Spleen (tissue), 13 donors: ENCODE measurements at regions of chr1 and their contacts with region 1.

Region 1: DNA sequence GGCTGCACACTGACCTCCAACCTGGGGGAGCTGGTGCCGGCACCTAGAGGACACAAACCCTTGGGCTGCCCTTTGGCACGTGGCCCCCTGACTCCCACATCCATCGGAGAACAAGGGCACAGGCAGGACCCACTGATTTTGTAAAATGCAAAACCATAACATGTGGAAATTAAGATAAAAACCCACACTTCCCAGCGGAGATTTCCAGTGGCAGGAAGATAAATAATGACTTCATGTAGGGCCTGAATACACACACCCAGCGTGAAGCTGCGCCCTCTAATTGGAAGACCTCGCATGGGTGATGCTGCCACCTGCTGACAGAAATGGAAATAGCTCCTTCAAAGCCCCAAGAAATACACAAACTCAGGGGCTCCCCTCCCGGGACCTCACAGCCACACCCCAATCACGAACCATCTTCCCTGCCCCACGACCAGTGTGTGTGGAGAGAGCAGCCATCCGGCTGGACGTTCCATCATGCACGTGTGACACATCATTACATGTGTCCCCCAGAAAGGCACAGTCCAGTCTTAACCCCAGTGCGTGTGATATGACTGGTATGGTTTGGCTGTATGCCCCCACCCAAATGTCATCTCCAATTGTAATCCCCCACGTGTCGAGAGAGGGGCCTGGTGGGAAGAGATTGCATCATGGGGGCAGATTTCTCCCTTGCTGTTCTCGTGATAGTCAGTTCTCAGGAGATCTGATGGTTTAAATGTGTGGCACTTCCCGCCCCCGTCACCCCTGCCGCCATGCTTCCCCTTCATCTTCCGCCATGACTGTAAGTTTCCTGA is 5.7 kb upstream of the TPRG1L start:
- DNase-seq: peak; percentile 86
- H3K4me3 ChIP-seq: no peak overlapping the region
- H3K27ac ChIP-seq: peak overlapping the region in 1 of 8 donors; percentile 18
- H3K4me1 ChIP-seq: peaks cover 23 to 58% (median 35%) of the 10 kb centered on the region in 6 donors
- H3K27me3 ChIP-seq: peaks cover 0 to 32% (median 0%) of the 10 kb centered on the region in 7 donors
- CTCF ChIP-seq: peak; percentile 67 to 90 (median 85)
- POLR2A ChIP-seq: no peak

Region 2: GRCh38 chr1:3491291-3492246 is 127.5 kb before region 1 on chr1:
- intact Hi-C with region 1: loop called (anchors 2 kb)
- DNase-seq: peak; percentile 95
- H3K4me3 ChIP-seq: peak overlapping the region in 3 of 8 donors; percentile 14 to 58 (median 19)
- H3K27ac ChIP-seq: no peak overlapping the region
- H3K4me1 ChIP-seq: peaks cover 0 to 13% (median 12%) of the 10 kb centered on the region in 6 donors
- H3K27me3 ChIP-seq: no peaks in the 10 kb centered on the region
- CTCF ChIP-seq: peak; percentile 95 to 100 (median 100)
- POLR2A ChIP-seq: no peak

Region 3: DNA sequence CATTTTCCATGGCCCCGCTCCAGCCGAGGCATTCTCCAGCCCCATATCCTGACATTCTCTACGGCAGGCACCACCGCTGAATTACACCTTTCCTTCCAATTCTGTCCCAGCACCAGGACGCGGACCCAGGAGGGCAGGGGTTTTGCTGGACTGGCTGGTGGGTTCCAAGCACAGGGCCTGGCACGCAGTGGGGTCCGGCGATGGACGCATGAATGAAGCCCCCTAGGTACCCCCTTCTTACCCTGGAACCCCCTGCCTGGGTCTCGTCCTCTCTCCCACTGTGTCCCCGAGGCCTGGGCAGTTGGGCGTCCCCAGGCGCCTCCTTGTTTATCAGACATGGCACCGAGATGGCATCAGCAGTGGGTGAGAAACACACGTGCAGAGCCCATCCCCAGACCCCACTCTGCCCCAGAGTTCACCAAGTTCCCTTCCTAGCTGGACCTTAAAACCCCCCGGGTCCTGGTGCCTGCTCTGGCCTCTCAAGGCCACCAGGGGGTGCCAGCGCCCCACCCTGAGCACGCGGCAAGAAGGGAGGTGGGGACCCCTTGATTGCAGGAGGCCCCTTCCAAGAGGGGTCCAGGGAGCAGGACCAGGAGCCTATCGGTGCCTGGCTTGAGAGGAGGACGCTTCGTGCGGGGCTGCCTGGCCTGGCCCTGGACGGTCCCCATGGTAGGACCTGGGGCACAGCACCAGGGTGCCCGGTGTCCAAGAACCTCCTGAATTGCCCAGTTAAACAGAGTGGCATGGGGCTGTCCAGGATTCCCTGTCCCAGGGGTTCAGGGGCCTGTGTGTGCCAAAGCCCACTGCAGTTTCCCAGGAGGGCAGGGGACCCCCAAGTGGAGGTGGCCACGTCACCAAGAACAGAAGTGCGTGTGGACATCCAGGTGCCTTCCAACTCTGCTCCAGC is 53.9 kb before region 1 on chr1:
- intact Hi-C with region 1: loop called (anchors 5 kb)
- DNase-seq: peak; percentile 80
- H3K4me3 ChIP-seq: no peak overlapping the region
- H3K27ac ChIP-seq: no peak overlapping the region
- H3K4me1 ChIP-seq: peaks cover 0 to 1% (median 0%) of the 10 kb centered on the region in 6 donors
- H3K27me3 ChIP-seq: peaks cover 0 to 17% (median 0%) of the 10 kb centered on the region in 7 donors
- CTCF ChIP-seq: peak; percentile 59 to 92 (median 83)
- POLR2A ChIP-seq: no peak